HepG2 (cell line): ENCODE measurements at regions of chr1 and their contacts with region 1.

Region 1: DNA sequence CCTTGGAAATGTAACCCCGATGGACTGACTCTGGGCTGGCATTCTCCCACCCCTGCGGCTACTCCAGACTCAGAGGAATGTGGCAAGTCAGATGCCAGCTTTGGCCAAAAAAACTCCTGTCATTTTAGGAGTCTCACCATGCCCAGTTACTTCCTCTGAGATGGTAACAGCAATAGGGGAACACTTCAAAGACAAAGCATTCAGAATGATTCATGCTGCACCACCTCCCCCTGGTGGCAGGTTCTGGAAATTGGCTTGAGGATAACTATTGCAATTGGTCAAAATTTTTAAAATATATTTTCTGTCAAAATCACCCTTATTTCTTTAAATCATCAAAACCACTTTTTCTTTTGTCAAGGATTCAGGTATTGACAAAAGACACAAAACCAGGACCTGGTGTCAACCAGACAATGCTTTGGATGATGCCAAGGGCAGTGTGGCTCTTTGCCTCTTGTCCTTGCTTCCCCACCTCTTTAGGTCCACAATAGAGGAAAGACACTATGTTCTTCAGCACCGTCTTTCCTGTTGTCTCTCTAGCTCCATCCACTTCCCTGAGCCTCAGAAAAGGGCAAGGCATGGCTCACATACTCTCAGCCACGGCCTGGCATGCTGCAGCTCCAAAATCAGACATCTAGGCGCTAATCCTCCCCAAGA is 9.9 kb upstream of the CDCA8 start:
- DNase-seq: peak; percentile 38
- ATAC-seq: peak; percentile 64
- H3K4me3 ChIP-seq: no peak overlapping the region
- H3K27ac ChIP-seq: no peak overlapping the region
- H3K4me1 ChIP-seq: no peaks in the 10 kb centered on the region
- H3K27me3 ChIP-seq: peaks cover 0 to 2% of the 10 kb centered on the region in 2 experiments; a peak in 1 of 5 replicates
- CTCF ChIP-seq: peak; percentile 81
- EP300 ChIP-seq: no peak
- POLR2A ChIP-seq: no peak
- RAD21 ChIP-seq: peak; percentile 82; the same call in 1 of the 2 replicates

Region 2: DNA sequence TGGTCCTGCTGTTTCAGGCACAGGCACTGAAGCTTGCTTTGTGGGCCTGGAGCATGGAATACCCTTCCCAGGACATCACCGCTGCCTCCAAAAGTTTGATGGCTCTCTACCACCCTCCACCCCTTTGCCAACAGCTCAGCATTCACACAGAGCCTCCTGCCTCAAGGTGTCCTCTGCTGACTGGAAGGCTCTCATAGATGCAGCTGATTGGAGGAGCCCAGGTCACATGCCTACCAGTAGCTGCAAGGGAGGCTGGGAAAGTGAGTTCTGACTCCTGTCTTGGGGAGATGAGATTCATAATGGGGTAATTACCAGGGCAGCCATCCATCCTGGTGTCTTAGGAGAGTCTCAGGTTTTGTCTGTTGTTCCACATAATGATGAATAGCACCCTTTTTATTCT is 523.4 kb before region 1 on chr1:
- CTCF ChIA-PET with region 1: no interaction called
- POLR2A ChIA-PET with region 1: no interaction called
- in situ Hi-C with region 1: no loop called
- intact Hi-C with region 1: no loop called
- DNase-seq: no peak
- ATAC-seq: no peak
- H3K4me3 ChIP-seq: no peak overlapping the region
- H3K27ac ChIP-seq: no peak overlapping the region
- H3K4me1 ChIP-seq: no peaks in the 10 kb centered on the region
- H3K27me3 ChIP-seq: peaks cover 0 to 1% of the 10 kb centered on the region in 2 experiments; a peak in 2 of 5 replicates
- CTCF ChIP-seq: no peak
- EP300 ChIP-seq: no peak
- POLR2A ChIP-seq: no peak
- RAD21 ChIP-seq: no peak

Region 3: DNA sequence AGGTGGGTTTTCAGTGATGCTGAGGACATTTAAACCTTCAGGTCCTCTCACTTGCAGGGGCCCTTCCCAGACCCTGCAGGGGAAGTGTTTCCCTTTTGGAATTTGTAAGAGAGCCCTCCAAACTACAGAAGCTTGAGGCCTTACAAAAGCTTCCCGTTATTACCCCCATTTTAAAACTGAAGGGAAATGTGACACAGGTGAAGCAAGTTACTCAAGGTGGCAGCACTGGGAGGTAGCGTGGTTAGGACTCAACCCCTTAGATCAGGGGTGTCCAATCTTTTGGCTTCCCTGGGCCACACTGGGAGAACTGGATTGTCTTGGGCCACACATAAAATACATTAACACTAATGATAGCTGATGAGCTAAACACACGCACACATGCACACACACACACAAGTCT is 223.9 kb before region 1 on chr1:
- CTCF ChIA-PET with region 1: interaction called, 3 read pairs
- POLR2A ChIA-PET with region 1: no interaction called
- in situ Hi-C with region 1: loop called (anchors 5 kb)
- intact Hi-C with region 1: no loop called
- DNase-seq: no peak
- ATAC-seq: peak; percentile 34; the same call in 2 of the 3 replicates
- H3K4me3 ChIP-seq: no peak overlapping the region
- H3K27ac ChIP-seq: no peak overlapping the region
- H3K4me1 ChIP-seq: peaks cover 19% of the 10 kb centered on the region
- H3K27me3 ChIP-seq: no peaks in the 10 kb centered on the region
- CTCF ChIP-seq: 0 out of 2 replicates have a peak, but pooled peaks have one; percentile 36
- EP300 ChIP-seq: no peak
- POLR2A ChIP-seq: no peak
- RAD21 ChIP-seq: no peak

Region 4: DNA sequence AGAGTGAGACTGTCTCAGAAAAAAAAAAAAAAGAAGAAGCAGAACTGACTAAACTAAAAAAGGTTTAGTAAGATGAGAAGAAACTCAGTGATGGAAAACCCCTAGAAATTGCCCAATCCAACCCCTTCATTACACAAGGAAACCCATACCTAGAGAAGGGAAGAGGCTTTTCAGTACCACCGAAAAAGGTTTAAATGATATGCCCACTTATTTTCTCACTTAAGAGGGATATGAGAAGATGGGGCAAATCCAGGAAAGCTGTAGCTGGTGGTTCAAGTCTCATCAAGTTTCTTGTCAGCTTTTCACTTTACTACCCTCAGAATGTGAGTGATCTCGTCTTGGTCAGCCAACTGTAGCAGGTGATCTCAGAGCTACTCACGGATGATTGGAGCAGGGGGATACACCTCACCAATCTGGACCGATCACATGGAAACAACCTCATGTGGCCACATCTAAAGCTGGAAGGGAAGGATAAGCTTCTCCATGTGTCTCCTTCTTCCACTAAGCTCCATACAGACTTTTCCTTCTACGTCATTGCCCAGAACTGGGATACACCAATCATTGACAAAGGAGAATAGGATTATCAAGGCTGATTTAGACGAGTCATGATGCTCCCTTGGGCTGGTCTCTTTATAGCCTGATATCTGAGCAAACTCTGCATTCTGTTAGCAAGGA is 490.8 kb after region 1 on chr1:
- CTCF ChIA-PET with region 1: no interaction called
- POLR2A ChIA-PET with region 1: no interaction called
- in situ Hi-C with region 1: no loop called
- intact Hi-C with region 1: no loop called
- DNase-seq: no peak
- ATAC-seq: no peak
- H3K4me3 ChIP-seq: no peak overlapping the region
- H3K27ac ChIP-seq: no peak overlapping the region
- H3K4me1 ChIP-seq: no peaks in the 10 kb centered on the region
- H3K27me3 ChIP-seq: peaks cover 0 to 1% of the 10 kb centered on the region in 2 experiments; a peak in 1 of 5 replicates
- CTCF ChIP-seq: no peak
- EP300 ChIP-seq: no peak
- POLR2A ChIP-seq: no peak
- RAD21 ChIP-seq: no peak